Activated CD8-positive, alpha-beta memory T cell treated with anti-CD3 and anti-CD28 coated beads, Interleukin-2, amount 10 ng/mL, durations not matched to agents 7 days and 5 days (primary cell): ENCODE measurements at regions of chr19 and their contacts with region 1.

Region 1: DNA sequence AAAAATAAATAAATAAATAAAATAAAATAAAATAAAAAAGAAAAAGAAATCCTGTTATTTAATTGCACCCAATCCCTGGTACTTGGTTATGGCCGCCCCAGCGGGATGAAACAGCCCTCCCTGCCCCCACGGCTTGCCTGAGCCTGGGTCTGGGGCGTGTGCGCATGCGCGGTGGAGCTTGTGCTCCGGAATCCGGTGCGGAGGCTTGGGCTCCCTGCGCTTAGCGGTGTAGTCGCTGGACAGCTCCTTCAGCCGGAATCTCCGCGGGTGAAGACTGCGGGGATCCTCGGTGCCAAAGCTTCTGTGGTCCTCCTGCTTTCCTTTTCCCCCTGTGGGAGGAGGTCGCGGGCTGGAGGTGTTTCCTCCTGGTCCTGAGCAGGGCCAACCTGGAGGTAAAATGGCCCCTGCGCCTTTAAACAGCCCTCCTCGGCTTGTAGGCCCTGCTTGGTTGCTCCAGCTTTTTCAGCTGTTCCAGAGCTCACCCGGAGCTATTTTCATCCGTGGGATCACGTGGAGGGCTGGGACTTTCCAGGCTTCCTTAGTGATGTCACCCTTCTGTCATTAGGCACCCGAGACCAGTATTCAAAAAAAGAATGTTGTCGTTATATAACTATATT is at the start of gene PLA2G4C:
- DNase-seq: peak; percentile 87
- ATAC-seq: peak; percentile 92
- H3K4me3 Mint-ChIP-seq: peak within 1 kb of the TSS; percentile 64
- H3K27ac Mint-ChIP-seq: peak within 1 kb of the TSS; percentile 60
- H3K4me1 Mint-ChIP-seq: peaks cover 6% of the 10 kb centered on the region
- H3K27me3 Mint-ChIP-seq: no peaks in the 10 kb centered on the region
- total RNA-seq, gene PLA2G4C: 0.82 to 2.1 TPM

Region 2: GRCh38 chr19:47863514-47863936 is 246.9 kb before region 1 on chr19:
- CTCF ChIA-PET with region 1: no interaction called
- DNase-seq: peak; percentile 85
- ATAC-seq: peak; percentile 89
- H3K4me3 Mint-ChIP-seq: no peak overlapping the region
- H3K27ac Mint-ChIP-seq: no peak overlapping the region
- H3K4me1 Mint-ChIP-seq: no peaks in the 10 kb centered on the region
- H3K27me3 Mint-ChIP-seq: peaks cover 6% of the 10 kb centered on the region

Region 3: DNA sequence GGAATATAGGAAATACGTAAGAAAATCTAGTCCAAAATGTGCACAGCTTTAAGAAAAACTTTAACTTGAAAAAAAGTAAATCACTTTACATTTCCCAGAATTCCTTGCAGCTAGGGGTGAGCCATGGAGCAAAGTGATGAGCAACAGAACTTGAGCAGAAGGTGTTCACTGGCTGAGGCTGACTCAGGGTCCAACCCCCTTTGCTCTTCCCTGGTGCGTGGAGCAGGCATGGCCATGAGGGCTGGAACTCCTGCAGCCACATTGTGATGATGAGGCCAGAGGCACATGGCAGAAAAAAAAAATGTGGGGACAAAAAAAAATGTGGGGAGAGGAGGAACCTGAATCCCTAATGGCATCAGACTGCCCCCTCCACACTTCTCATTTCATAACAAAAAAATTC is 10.0 kb after region 1 on chr19:
- CTCF ChIA-PET with region 1: interaction called, 11 read pairs
- DNase-seq: no peak
- ATAC-seq: no peak
- H3K4me3 Mint-ChIP-seq: no peak overlapping the region
- H3K27ac Mint-ChIP-seq: no peak overlapping the region
- H3K4me1 Mint-ChIP-seq: peaks cover 22% of the 10 kb centered on the region
- H3K27me3 Mint-ChIP-seq: no peaks in the 10 kb centered on the region

Region 4: GRCh38 chr19:48137411-48137810 is 27.0 kb after region 1 on chr19:
- CTCF ChIA-PET with region 1: no interaction called
- DNase-seq: no peak
- ATAC-seq: no peak
- H3K4me3 Mint-ChIP-seq: no peak overlapping the region
- H3K27ac Mint-ChIP-seq: no peak overlapping the region
- H3K4me1 Mint-ChIP-seq: no peaks in the 10 kb centered on the region
- H3K27me3 Mint-ChIP-seq: no peaks in the 10 kb centered on the region

Region 5: GRCh38 chr19:48152551-48152950 is 42.1 kb after region 1 on chr19:
- CTCF ChIA-PET with region 1: interaction called, 37 read pairs
- DNase-seq: peak; percentile 69
- ATAC-seq: peak; percentile 67
- H3K4me3 Mint-ChIP-seq: no peak overlapping the region
- H3K27ac Mint-ChIP-seq: peak overlapping the region; percentile 49
- H3K4me1 Mint-ChIP-seq: peaks cover 2% of the 10 kb centered on the region
- H3K27me3 Mint-ChIP-seq: no peaks in the 10 kb centered on the region